ENCODE measurements at regions of chr2 and their contacts with region 1.

Region 1: DNA sequence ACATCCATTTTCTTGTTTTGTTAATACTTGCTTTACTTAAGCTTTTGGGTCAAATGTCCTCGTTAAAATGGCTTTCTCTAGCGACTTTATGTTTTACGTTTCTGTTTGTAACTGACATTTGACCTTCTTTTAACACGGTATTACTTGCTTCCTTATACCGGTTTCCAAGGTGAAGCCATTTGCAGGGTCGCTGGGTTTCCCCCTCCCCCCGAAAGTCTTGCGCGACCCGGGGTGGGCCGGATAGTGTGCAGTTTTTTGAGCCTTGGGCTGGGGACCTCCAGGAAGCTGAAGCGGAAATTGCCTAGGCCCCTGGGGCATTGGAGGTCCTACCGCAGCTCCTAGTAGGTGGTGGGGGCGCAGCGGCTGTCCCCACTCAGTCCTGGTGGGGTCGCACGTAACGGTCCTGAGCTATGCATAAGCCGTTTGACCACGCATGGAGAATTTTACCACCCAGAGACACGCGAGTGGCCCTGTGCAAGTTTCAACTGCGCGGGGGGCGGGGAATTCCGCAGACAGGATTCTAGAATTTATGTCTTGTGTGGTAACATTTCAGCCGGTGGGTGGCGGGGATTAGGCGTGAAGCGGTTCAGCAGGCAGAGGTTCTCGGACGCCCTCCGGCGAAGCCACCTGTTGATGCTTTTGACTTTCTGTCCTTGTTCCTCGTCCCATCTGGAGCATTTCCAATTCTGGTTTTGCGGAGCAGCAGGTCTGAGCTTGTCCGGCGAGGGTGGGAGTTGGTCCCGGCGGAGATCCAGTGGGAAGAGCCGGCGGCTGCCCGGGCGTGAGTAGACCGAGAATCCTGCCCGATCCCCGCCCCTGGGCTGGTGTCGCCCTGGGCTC is 2.4 kb downstream of the CFLAR start:
- DNase-seq: peak; percentile 75 to 90 (median 81)
- H3K4me3 ChIP-seq: peak overlapping the region; percentile 89
- H3K4me3 Mint-ChIP-seq: peak overlapping the region; percentile 92 to 100 (median 95)
- H3K27ac ChIP-seq: peak overlapping the region; percentile 96
- H3K27ac Mint-ChIP-seq: peak overlapping the region; percentile 96 to 100 (median 99)
- H3K4me1 ChIP-seq: peaks cover 43% of the 10 kb centered on the region
- H3K4me1 Mint-ChIP-seq: peaks cover 46 to 69% (median 53%) of the 10 kb centered on the region in 3 donors
- H3K27me3 ChIP-seq: no peaks in the 10 kb centered on the region
- H3K27me3 Mint-ChIP-seq: peaks cover 0 to 1% of the 10 kb centered on the region in 2 donors

Region 2: GRCh38 chr2:200864176-200864976 is 254.0 kb before region 1 on chr2 and contains the start of gene CLK1:
- CTCF ChIA-PET with region 1: interaction called, 4 read pairs
- POLR2A ChIA-PET with region 1: interaction called, 41 read pairs
- DNase-seq: peak; percentile 92 to 98 (median 94)
- H3K4me3 ChIP-seq: peak within 1 kb of the TSS; percentile 100
- H3K4me3 Mint-ChIP-seq: peak within 1 kb of the TSS; percentile 92 to 99 (median 94)
- H3K27ac ChIP-seq: peak within 1 kb of the TSS; percentile 100
- H3K27ac Mint-ChIP-seq: peak within 1 kb of the TSS; percentile 92 to 100 (median 100)
- H3K4me1 ChIP-seq: peaks cover 28% of the 10 kb centered on the region
- H3K4me1 Mint-ChIP-seq: peaks cover 41 to 51% (median 49%) of the 10 kb centered on the region in 3 donors
- H3K27me3 ChIP-seq: no peaks in the 10 kb centered on the region
- H3K27me3 Mint-ChIP-seq: peaks cover 0 to 20% of the 10 kb centered on the region in 2 donors
- total RNA-seq, gene CLK1: 110 to 114 TPM

Region 3: GRCh38 chr2:200963124-200963917 is 155.0 kb before region 1 on chr2 and contains the start of gene ORC2:
- CTCF ChIA-PET with region 1: interaction called, 11 read pairs
- POLR2A ChIA-PET with region 1: interaction called, 13 read pairs
- DNase-seq: peak; percentile 89 to 96 (median 93)
- H3K4me3 ChIP-seq: peak within 1 kb of the TSS; percentile 93
- H3K4me3 Mint-ChIP-seq: peak within 1 kb of the TSS; percentile 97 to 99 (median 97)
- H3K27ac ChIP-seq: peak within 1 kb of the TSS; percentile 74
- H3K27ac Mint-ChIP-seq: peak within 1 kb of the TSS; percentile 98 to 100 (median 98)
- H3K4me1 ChIP-seq: peaks cover 32% of the 10 kb centered on the region
- H3K4me1 Mint-ChIP-seq: peaks cover 59 to 73% (median 70%) of the 10 kb centered on the region in 3 donors
- H3K27me3 ChIP-seq: no peaks in the 10 kb centered on the region
- H3K27me3 Mint-ChIP-seq: peaks cover 0 to 2% of the 10 kb centered on the region in 2 donors
- total RNA-seq, gene ORC2: 47.9 to 51.9 TPM

Region 4: DNA sequence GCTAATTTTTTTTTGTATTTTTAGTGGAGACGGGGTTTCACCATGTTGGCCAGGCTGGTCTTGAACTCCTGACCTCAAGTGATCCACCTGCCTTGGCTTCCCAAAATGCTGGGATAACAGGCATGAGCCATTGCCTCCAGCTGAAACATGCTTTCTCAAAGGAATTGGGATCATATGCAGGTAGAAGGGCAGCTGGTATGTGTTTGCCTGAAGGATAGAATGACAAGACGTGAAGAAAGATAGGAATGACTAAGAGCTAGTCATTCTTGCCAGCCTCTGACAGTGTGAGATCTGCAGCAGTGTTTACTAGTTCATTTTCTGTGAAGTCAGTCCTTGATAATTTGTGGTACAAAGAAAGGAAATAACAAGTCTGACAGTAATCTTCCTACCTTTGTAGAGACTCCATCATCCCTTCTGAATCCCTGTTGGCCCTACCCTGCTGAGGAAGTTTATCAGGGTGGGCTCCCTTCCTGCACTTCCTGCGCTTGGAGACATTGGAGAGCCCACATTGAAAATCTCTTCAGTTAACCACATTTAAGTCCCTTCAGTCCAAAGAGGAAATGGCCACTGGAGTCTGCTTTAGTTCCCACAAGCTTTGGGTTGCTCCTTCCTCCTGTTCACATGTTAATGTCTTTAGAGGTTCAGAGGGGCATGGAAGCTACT is 12.3 kb after region 1 on chr2:
- CTCF ChIA-PET with region 1: interaction called, 65 read pairs
- POLR2A ChIA-PET with region 1: interaction called, 77 read pairs
- DNase-seq: peak in 3 of 5 donors; percentile 49 to 58 (median 57)
- H3K4me3 ChIP-seq: peak overlapping the region; percentile 32
- H3K4me3 Mint-ChIP-seq: peak overlapping the region; percentile 64 to 87 (median 76)
- H3K27ac ChIP-seq: peak overlapping the region; percentile 61
- H3K27ac Mint-ChIP-seq: peak overlapping the region; percentile 95 to 99 (median 96)
- H3K4me1 ChIP-seq: peaks cover 75% of the 10 kb centered on the region
- H3K4me1 Mint-ChIP-seq: peaks cover 75 to 88% (median 83%) of the 10 kb centered on the region in 3 donors
- H3K27me3 ChIP-seq: no peaks in the 10 kb centered on the region
- H3K27me3 Mint-ChIP-seq: peaks cover 0 to 2% of the 10 kb centered on the region in 2 donors

Region 5: DNA sequence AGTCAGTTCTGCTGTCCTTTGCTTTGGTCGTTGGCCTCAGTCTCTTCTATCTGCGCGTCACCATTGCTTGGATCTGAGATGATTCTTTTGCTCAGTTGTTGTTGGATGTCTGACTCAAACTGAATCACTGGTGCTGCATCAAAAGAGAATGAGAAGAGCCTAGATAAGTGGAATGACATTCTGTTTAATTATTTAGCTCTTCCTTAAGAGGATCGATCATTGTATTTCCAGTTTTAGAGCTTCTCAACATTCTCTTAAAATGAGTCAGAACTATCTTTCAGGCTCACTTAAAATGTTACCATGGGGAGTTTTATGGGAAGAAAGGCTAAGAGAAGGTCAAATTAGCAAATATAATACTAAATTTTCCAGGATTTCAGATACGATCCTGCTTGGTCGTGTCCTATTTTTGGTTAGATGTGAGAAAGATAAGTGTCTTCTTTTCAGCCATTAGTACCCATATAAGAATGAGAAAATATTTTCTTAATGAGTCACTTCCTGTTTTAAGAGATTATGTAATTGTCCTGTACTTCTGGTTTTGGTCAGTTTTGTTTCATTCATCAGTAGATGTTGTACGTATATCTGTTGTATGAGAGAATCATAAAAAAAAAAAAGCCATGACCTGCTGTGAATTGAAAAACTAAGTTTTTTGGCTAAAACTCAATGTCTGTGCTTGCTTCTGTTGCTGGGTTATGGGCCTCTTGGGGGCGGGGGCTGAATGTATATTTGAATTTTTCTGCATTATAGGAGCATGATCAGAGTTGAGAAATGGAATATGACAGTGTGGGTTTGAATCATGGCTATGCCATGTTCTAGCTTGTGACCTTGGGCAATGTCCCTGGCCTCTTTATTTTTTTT is 33.0 kb after region 1 on chr2:
- CTCF ChIA-PET with region 1: interaction called, 41 read pairs
- POLR2A ChIA-PET with region 1: interaction called, 9 read pairs
- DNase-seq: no peak
- H3K4me3 ChIP-seq: no peak overlapping the region
- H3K4me3 Mint-ChIP-seq: peak overlapping the region in 4 of 7 donors; percentile 4 to 54 (median 32)
- H3K27ac ChIP-seq: peak overlapping the region; percentile 38
- H3K27ac Mint-ChIP-seq: peak overlapping the region; percentile 76 to 96 (median 90)
- H3K4me1 ChIP-seq: peaks cover 12% of the 10 kb centered on the region
- H3K4me1 Mint-ChIP-seq: peaks cover 38 to 60% (median 53%) of the 10 kb centered on the region in 3 donors
- H3K27me3 ChIP-seq: no peaks in the 10 kb centered on the region
- H3K27me3 Mint-ChIP-seq: no peaks in the 10 kb centered on the region

Region 6: DNA sequence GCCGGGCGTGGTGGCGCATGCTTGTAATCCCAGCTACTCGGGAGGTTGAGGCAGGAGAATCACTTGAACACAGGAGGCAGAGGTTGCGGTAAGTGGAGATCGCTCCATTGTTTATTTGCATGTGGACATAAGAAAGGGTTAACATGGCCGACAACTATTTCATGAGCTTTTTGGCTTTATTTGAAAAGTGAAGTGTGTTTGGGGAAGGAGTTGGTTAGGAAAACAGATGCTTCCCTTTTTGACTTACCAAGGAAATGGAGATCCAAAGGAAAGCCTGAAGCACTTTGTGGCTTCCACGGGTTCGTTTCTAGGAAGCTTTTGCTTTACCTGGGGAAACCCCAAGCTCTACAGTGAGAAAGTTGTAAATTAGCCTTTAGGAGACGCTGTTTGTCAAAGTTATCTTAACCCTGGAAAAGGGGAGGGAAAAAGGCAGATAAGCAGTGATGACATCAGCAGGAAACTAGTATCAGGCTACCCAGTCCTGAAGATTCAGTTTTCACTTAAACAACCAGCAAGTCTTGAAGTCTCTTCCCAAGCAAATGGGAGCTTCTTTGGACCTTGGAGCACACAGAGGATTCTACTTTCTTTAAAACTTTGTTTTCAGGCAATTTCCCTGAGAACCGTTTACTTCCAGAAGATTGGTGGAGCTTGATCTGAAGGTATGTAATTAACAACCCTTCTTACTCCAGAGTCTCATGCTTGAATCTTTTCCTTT is 64.5 kb after region 1 on chr2 and contains the start of gene CASP10:
- CTCF ChIA-PET with region 1: interaction called, 13 read pairs
- POLR2A ChIA-PET with region 1: interaction called, 4 read pairs
- DNase-seq: peak in 3 of 5 donors; percentile 22 to 79 (median 60)
- H3K4me3 ChIP-seq: peak within 1 kb of the TSS; percentile 93
- H3K4me3 Mint-ChIP-seq: peak within 1 kb of the TSS; percentile 88 to 97 (median 92)
- H3K27ac ChIP-seq: peak within 1 kb of the TSS; percentile 81
- H3K27ac Mint-ChIP-seq: peak within 1 kb of the TSS; percentile 76 to 97 (median 92)
- H3K4me1 ChIP-seq: peaks cover 23% of the 10 kb centered on the region
- H3K4me1 Mint-ChIP-seq: peaks cover 44 to 50% (median 49%) of the 10 kb centered on the region in 3 donors
- H3K27me3 ChIP-seq: no peaks in the 10 kb centered on the region
- H3K27me3 Mint-ChIP-seq: no peaks in the 10 kb centered on the region
- total RNA-seq, gene CASP10: 6.7 to 7.3 TPM

Region 7: GRCh38 chr2:201223089-201224073 is 105.0 kb after region 1 on chr2:
- CTCF ChIA-PET with region 1: no interaction called
- POLR2A ChIA-PET with region 1: no interaction called
- DNase-seq: no peak
- H3K4me3 ChIP-seq: no peak overlapping the region
- H3K4me3 Mint-ChIP-seq: peak overlapping the region in 1 of 7 donors; percentile 53
- H3K27ac ChIP-seq: no peak overlapping the region
- H3K27ac Mint-ChIP-seq: peak overlapping the region in 7 of 8 donors; percentile 19 to 91 (median 43)
- H3K4me1 ChIP-seq: peaks cover 23% of the 10 kb centered on the region
- H3K4me1 Mint-ChIP-seq: peaks cover 9 to 20% (median 12%) of the 10 kb centered on the region in 3 donors
- H3K27me3 ChIP-seq: no peaks in the 10 kb centered on the region
- H3K27me3 Mint-ChIP-seq: no peaks in the 10 kb centered on the region

Measured in CD8-positive, alpha-beta memory T cell (primary cell).